Prostate gland (tissue), 2 donors: ENCODE measurements at regions of chr1 and their contacts with region 1.

Region 1: GRCh38 chr1:27662707-27663393 is 9.1 kb downstream of the IFI6 start:
- DNase-seq: peak; percentile 73
- H3K4me3 ChIP-seq: no peak overlapping the region
- H3K27ac ChIP-seq: peak overlapping the region in 1 of 2 donors; percentile 10
- H3K4me1 ChIP-seq: no peaks in the 10 kb centered on the region
- H3K27me3 ChIP-seq: no peaks in the 10 kb centered on the region
- CTCF ChIP-seq: peak; percentile 74 to 97 (median 96)
- POLR2A ChIP-seq: no peak

Region 2: GRCh38 chr1:27300341-27301051 is 362.4 kb before region 1 on chr1:
- intact Hi-C with region 1: loop called (anchors 5 kb)
- DNase-seq: peak; percentile 79
- H3K4me3 ChIP-seq: no peak overlapping the region
- H3K27ac ChIP-seq: peak overlapping the region; percentile 77 to 84
- H3K4me1 ChIP-seq: peaks cover 4% of the 10 kb centered on the region
- H3K27me3 ChIP-seq: no peaks in the 10 kb centered on the region
- CTCF ChIP-seq: peak; percentile 95 to 99 (median 98)
- POLR2A ChIP-seq: no peak

Region 3: GRCh38 chr1:27341525-27342252 is 321.2 kb before region 1 on chr1 and contains the start of gene SYTL1:
- intact Hi-C with region 1: no loop called
- DNase-seq: peak; percentile 72
- H3K4me3 ChIP-seq: peak within 1 kb of the TSS; percentile 40 to 46
- H3K27ac ChIP-seq: peak within 1 kb of the TSS; percentile 78 to 81
- H3K4me1 ChIP-seq: no peaks in the 10 kb centered on the region
- H3K27me3 ChIP-seq: no peaks in the 10 kb centered on the region
- CTCF ChIP-seq: no peak
- POLR2A ChIP-seq: peak; percentile 65
- total RNA-seq, gene SYTL1: 94.7 to 217 TPM

Region 4: GRCh38 chr1:27556781-27557595 is 105.9 kb before region 1 on chr1:
- intact Hi-C with region 1: loop called (anchors 2 kb)
- DNase-seq: peak; percentile 87
- H3K4me3 ChIP-seq: peak overlapping the region in 1 of 2 donors; percentile 11
- H3K27ac ChIP-seq: peak overlapping the region; percentile 76 to 85
- H3K4me1 ChIP-seq: no peaks in the 10 kb centered on the region
- H3K27me3 ChIP-seq: no peaks in the 10 kb centered on the region
- CTCF ChIP-seq: peak; percentile 87 to 95 (median 90)
- POLR2A ChIP-seq: peak; percentile 53

Region 5: GRCh38 chr1:27609210-27609555 is 53.7 kb before region 1 on chr1:
- intact Hi-C with region 1: loop called (anchors 2 kb)
- DNase-seq: no peak
- H3K4me3 ChIP-seq: no peak overlapping the region
- H3K27ac ChIP-seq: no peak overlapping the region
- H3K4me1 ChIP-seq: no peaks in the 10 kb centered on the region
- H3K27me3 ChIP-seq: no peaks in the 10 kb centered on the region
- CTCF ChIP-seq: no peak
- POLR2A ChIP-seq: no peak